HepG2 (cell line): ENCODE measurements at regions of chr1 and their contacts with region 1.

Region 1: GRCh38 chr1:109548321-109549267 is at the start of gene GNAI3:
- DNase-seq: peak; percentile 94
- ATAC-seq: peak; percentile 98
- H3K4me3 ChIP-seq: peak within 1 kb of the TSS; percentile 83 to 96 (median 93)
- H3K27ac ChIP-seq: peak within 1 kb of the TSS; percentile 72
- H3K4me1 ChIP-seq: peaks cover 61% of the 10 kb centered on the region
- H3K27me3 ChIP-seq: no peaks in the 10 kb centered on the region; a peak in 2 of 5 replicates
- CTCF ChIP-seq: peak; percentile 17; the same call in 1 of the 2 replicates
- EP300 ChIP-seq: 0 out of 4 replicates have a peak, but pooled peaks of 1 of the 2 experiments have one; percentile 30
- POLR2A ChIP-seq: peak; percentile 94 to 96
- RAD21 ChIP-seq: no peak
- total RNA-seq, gene GNAI3: 9.0 and 11.0 TPM in 2 replicates

Region 2: GRCh38 chr1:109589177-109589576 is 40.6 kb after region 1 on chr1:
- CTCF ChIA-PET with region 1: no interaction called
- POLR2A ChIA-PET with region 1: no interaction called
- in situ Hi-C with region 1: no loop called
- intact Hi-C with region 1: loop called (anchors 5 kb)
- DNase-seq: no peak
- ATAC-seq: no peak
- H3K4me3 ChIP-seq: no peak overlapping the region
- H3K27ac ChIP-seq: no peak overlapping the region
- H3K4me1 ChIP-seq: peaks cover 46% of the 10 kb centered on the region
- H3K27me3 ChIP-seq: no peaks in the 10 kb centered on the region; a peak in 1 of 5 replicates
- CTCF ChIP-seq: no peak
- EP300 ChIP-seq: no peak
- POLR2A ChIP-seq: no peak
- RAD21 ChIP-seq: no peak

Region 3: DNA sequence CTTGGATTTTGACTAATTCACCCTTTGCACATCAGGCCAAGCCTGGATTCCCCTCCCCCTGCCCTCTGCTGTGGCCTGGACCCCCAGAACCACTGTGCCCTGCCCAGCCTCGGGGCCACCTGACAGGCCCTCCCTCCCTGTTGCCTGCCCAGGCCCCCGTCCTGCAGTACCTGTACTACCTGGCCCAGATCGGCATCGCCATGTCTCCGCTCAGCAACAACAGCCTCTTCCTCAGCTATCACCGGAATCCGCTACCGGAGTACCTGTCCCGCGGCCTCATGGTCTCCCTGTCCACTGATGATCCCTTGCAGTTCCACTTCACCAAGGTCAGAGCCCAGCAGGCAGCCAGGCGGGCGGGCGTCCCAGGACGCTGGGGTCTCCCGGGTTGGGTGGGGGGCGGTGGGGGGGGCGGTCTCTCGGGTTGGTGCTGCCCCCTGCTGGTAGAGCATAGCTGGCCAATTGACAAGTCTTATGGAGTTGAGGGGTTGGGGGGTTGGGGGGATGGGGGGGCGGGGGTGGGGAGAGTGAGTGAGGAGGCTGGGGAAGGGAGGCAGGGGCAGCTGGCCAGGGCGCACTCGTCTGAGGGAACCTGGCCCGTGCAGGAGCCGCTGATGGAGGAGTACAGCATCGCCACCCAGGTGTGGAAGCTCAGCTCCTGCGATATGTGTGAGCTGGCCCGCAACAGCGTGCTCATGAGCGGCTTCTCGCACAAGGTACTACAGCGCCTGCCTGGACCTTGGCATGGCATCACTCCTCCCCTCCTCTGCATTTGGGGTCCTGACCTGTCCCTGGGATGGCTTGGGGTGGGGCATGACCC is 81.7 kb after region 1 on chr1:
- CTCF ChIA-PET with region 1: interaction called, 23 read pairs
- POLR2A ChIA-PET with region 1: interaction called, 8 read pairs
- in situ Hi-C with region 1: no loop called
- intact Hi-C with region 1: no loop called
- DNase-seq: no peak
- ATAC-seq: 0 out of 3 replicates have a peak, but pooled peaks have one; percentile 6
- H3K4me3 ChIP-seq: no peak overlapping the region
- H3K27ac ChIP-seq: no peak overlapping the region
- H3K4me1 ChIP-seq: peaks cover 8% of the 10 kb centered on the region
- H3K27me3 ChIP-seq: no peaks in the 10 kb centered on the region
- CTCF ChIP-seq: no peak
- EP300 ChIP-seq: no peak
- POLR2A ChIP-seq: no peak
- RAD21 ChIP-seq: no peak

Region 4: GRCh38 chr1:109643385-109644230 is 95.0 kb after region 1 on chr1:
- CTCF ChIA-PET with region 1: interaction called, 12 read pairs
- POLR2A ChIA-PET with region 1: interaction called, 23 read pairs
- in situ Hi-C with region 1: no loop called
- intact Hi-C with region 1: loop called (anchors 2 kb)
- DNase-seq: peak; percentile 67
- ATAC-seq: peak; percentile 92
- H3K4me3 ChIP-seq: peak overlapping the region; percentile 34 to 67 (median 48)
- H3K27ac ChIP-seq: no peak overlapping the region
- H3K4me1 ChIP-seq: peaks cover 23% of the 10 kb centered on the region
- H3K27me3 ChIP-seq: 0 out of 5 replicates have a peak, but pooled peaks cover 0 to 3% of the 10 kb centered on the region in 2 experiments
- CTCF ChIP-seq: peak; percentile 94
- EP300 ChIP-seq: 0 out of 4 replicates have a peak, but pooled peaks of 1 of the 2 experiments have one; percentile 5
- POLR2A ChIP-seq: no peak
- RAD21 ChIP-seq: peak; percentile 90

Region 5: DNA sequence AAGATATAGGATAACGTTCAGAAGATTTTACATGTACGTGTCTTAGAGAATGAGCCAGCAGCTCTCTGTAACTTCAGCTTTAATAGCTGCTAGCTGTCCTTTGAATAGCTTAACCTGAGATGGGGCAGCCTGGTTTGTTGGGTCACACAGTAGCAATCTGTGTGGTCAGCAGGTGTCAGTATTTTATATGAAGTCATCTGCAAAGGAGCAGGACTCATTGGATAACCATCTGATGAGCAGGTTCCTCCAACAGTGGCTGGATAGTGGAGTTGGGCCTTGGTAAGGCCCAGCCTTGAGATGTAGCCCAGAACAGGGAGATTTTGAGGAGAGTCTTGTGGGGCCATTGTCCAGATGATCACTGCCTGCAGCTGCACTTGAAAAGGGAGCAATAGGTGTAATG is 169.9 kb after region 1 on chr1:
- CTCF ChIA-PET with region 1: no interaction called
- POLR2A ChIA-PET with region 1: no interaction called
- in situ Hi-C with region 1: loop called (anchors 10 kb)
- intact Hi-C with region 1: no loop called
- DNase-seq: peak; percentile 65
- ATAC-seq: peak; percentile 93
- H3K4me3 ChIP-seq: no peak overlapping the region
- H3K27ac ChIP-seq: no peak overlapping the region
- H3K4me1 ChIP-seq: no peaks in the 10 kb centered on the region
- H3K27me3 ChIP-seq: peaks cover 3 to 35% of the 10 kb centered on the region in 2 experiments; a peak in 3 of 5 replicates
- CTCF ChIP-seq: peak; percentile 75
- EP300 ChIP-seq: no peak
- POLR2A ChIP-seq: no peak
- RAD21 ChIP-seq: 0 out of 2 replicates have a peak, but pooled peaks have one; percentile 25

Region 6: GRCh38 chr1:109984456-109985275 is 436.1 kb after region 1 on chr1 and contains the start of gene AHCYL1:
- CTCF ChIA-PET with region 1: no interaction called
- POLR2A ChIA-PET with region 1: interaction called, 9 read pairs
- in situ Hi-C with region 1: no loop called
- intact Hi-C with region 1: loop called (anchors 10 kb)
- DNase-seq: peak; percentile 95
- ATAC-seq: peak; percentile 90
- H3K4me3 ChIP-seq: peak within 1 kb of the TSS; percentile 81 to 94 (median 94)
- H3K27ac ChIP-seq: peak within 1 kb of the TSS; percentile 87
- H3K4me1 ChIP-seq: peaks cover 86% of the 10 kb centered on the region
- H3K27me3 ChIP-seq: no peaks in the 10 kb centered on the region; a peak in 1 of 5 replicates
- CTCF ChIP-seq: peak; percentile 100
- EP300 ChIP-seq: no peak; a peak in 1 of 4 replicates
- POLR2A ChIP-seq: peak; percentile 83 to 91
- RAD21 ChIP-seq: peak; percentile 98
- total RNA-seq, gene AHCYL1: 40.9 and 63.2 TPM in 2 replicates